ENCODE measurements at regions of chr10 and their contacts with region 1.

Region 1: DNA sequence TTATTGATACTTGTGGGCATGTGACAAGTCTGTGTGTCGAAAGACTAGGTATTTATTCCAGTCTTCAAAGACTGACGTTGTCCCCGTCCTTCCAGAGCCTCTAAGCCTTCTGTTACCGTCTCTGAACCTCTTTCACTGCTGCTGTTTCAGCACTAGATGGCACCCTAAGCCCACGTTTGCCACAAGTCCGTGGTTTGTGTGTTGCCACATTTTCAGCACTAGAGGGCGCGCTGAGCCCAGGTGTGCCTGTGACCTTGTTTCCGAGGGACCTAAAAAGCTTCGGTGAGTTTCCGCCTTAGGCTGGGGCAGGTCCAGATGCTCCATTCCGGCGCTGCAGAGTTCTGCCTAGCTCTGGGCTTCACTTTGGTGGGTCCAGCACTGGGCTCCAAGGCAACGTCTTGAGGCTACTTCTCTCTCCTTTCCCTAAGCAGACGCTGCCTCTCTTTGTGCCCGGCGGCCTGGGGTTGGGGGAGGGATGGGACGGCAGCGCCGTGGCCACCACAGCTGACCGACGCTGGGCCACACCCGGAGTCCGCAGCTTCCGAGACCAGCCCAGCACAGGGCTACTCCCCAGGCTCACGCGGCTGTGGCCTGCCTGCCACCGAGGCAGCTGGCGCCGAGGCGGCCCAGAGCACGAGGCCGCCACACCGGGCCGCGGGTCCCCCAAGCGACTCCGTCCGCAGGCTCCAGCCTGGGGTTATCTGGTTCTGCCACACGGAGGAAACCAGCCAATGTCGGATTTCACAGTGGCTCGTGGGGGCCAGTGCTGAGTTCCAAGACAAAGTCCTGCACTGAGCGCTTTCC is 520.2 kb downstream of the REEP3 start:
- DNase-seq: peak; percentile 94
- ATAC-seq: peak; percentile 85
- H3K4me3 ChIP-seq: peak overlapping the region; percentile 56
- H3K27ac ChIP-seq: no peak overlapping the region
- H3K4me1 ChIP-seq: no peaks in the 10 kb centered on the region
- H3K27me3 ChIP-seq: no peaks in the 10 kb centered on the region
- CTCF ChIP-seq: peak; percentile 100

Region 2: GRCh38 chr10:63866075-63866746 is 175.2 kb before region 1 on chr10:
- CTCF ChIA-PET with region 1: interaction called, 4 read pairs
- POLR2A ChIA-PET with region 1: no interaction called
- intact Hi-C with region 1: loop called (anchors 5 kb)
- DNase-seq: peak; percentile 87
- ATAC-seq: peak; percentile 88
- H3K4me3 ChIP-seq: peak overlapping the region; percentile 57
- H3K27ac ChIP-seq: no peak overlapping the region
- H3K4me1 ChIP-seq: peaks cover 11% of the 10 kb centered on the region
- H3K27me3 ChIP-seq: peaks cover 20% of the 10 kb centered on the region; the same call in 1 of the 2 replicates
- CTCF ChIP-seq: peak; percentile 92

Region 3: DNA sequence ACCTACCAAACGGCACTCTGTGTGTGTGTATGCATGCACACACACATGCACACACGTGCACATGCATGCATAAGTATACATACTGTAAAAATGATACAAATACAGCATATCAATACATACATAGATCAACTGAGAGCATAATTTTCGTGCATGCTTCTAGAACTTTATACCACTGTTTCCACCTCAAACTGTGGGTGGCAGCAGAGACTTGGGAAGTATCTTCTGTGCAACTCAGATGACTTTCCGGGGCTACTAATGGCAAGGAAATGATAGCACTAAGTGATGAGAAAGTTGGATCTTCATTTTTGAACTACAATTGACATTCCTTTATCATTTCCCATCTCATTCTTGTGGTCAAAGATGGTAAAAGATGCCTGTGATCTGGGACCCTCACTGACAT is 50.5 kb after region 1 on chr10:
- CTCF ChIA-PET with region 1: no interaction called
- POLR2A ChIA-PET with region 1: no interaction called
- intact Hi-C with region 1: loop called (anchors 2 kb)
- DNase-seq: peak; percentile 72
- ATAC-seq: peak; percentile 40
- H3K4me3 ChIP-seq: no peak overlapping the region
- H3K27ac ChIP-seq: no peak overlapping the region
- H3K4me1 ChIP-seq: peaks cover 35% of the 10 kb centered on the region
- H3K27me3 ChIP-seq: no peaks in the 10 kb centered on the region
- CTCF ChIP-seq: peak; percentile 86

Region 4: GRCh38 chr10:64103750-64104470 is 62.5 kb after region 1 on chr10:
- CTCF ChIA-PET with region 1: no interaction called
- POLR2A ChIA-PET with region 1: no interaction called
- intact Hi-C with region 1: no loop called
- DNase-seq: peak; percentile 56
- ATAC-seq: peak; percentile 45; the same call in 1 of the 2 replicates
- H3K4me3 ChIP-seq: no peak overlapping the region
- H3K27ac ChIP-seq: no peak overlapping the region
- H3K4me1 ChIP-seq: no peaks in the 10 kb centered on the region
- H3K27me3 ChIP-seq: no peaks in the 10 kb centered on the region
- CTCF ChIP-seq: no peak

Region 5: GRCh38 chr10:64261092-64261491 is 219.7 kb after region 1 on chr10:
- CTCF ChIA-PET with region 1: no interaction called
- POLR2A ChIA-PET with region 1: no interaction called
- intact Hi-C with region 1: no loop called
- DNase-seq: no peak
- ATAC-seq: no peak
- H3K4me3 ChIP-seq: no peak overlapping the region
- H3K27ac ChIP-seq: no peak overlapping the region
- H3K4me1 ChIP-seq: no peaks in the 10 kb centered on the region
- H3K27me3 ChIP-seq: no peaks in the 10 kb centered on the region
- CTCF ChIP-seq: no peak

Region 6: GRCh38 chr10:64288404-64288803 is 247.0 kb after region 1 on chr10:
- CTCF ChIA-PET with region 1: interaction called, 3 read pairs
- POLR2A ChIA-PET with region 1: no interaction called
- intact Hi-C with region 1: loop called (anchors 1 kb)
- DNase-seq: no peak
- ATAC-seq: no peak
- H3K4me3 ChIP-seq: no peak overlapping the region
- H3K27ac ChIP-seq: no peak overlapping the region
- H3K4me1 ChIP-seq: no peaks in the 10 kb centered on the region
- H3K27me3 ChIP-seq: no peaks in the 10 kb centered on the region
- CTCF ChIP-seq: no peak

Region 7: GRCh38 chr10:64430690-64431323 is 389.4 kb after region 1 on chr10:
- CTCF ChIA-PET with region 1: no interaction called
- POLR2A ChIA-PET with region 1: no interaction called
- intact Hi-C with region 1: loop called (anchors 5 kb)
- DNase-seq: peak; percentile 81
- ATAC-seq: peak; percentile 99
- H3K4me3 ChIP-seq: no peak overlapping the region
- H3K27ac ChIP-seq: no peak overlapping the region
- H3K4me1 ChIP-seq: no peaks in the 10 kb centered on the region
- H3K27me3 ChIP-seq: no peaks in the 10 kb centered on the region
- CTCF ChIP-seq: peak; percentile 88